PC-9 (cell line): ENCODE measurements at regions of chr10 and their contacts with region 1.

Region 1: GRCh38 chr10:124259139-124259825 is 159.4 kb downstream of the OAT start:
- DNase-seq: peak in 1 of 2 experiments; percentile 12
- H3K4me3 ChIP-seq: no peak overlapping the region
- H3K27ac ChIP-seq: no peak overlapping the region
- H3K4me1 ChIP-seq: no peaks in the 10 kb centered on the region
- H3K27me3 ChIP-seq: no peaks in the 10 kb centered on the region
- CTCF ChIP-seq: peak; percentile 46; the same call in 1 of the 2 replicates

Region 2: GRCh38 chr10:124388823-124389612 is 129.7 kb after region 1 on chr10:
- CTCF ChIA-PET with region 1: interaction called, 3 read pairs
- POLR2A ChIA-PET with region 1: no interaction called
- intact Hi-C with region 1: loop called (anchors 5 kb)
- DNase-seq: peak; percentile 55 to 85
- H3K4me3 ChIP-seq: peak overlapping the region; percentile 46; the same call in 1 of the 2 replicates
- H3K27ac ChIP-seq: no peak overlapping the region
- H3K4me1 ChIP-seq: peaks cover 13% of the 10 kb centered on the region
- H3K27me3 ChIP-seq: no peaks in the 10 kb centered on the region
- CTCF ChIP-seq: peak; percentile 80